ENCODE measurements at regions of chr12 and their contacts with region 1.

Region 1: GRCh38 chr12:57712701-57713100 is 18.8 kb downstream of the OS9 start:
- DNase-seq: no peak
- ATAC-seq: no peak
- H3K4me3 ChIP-seq: no peak overlapping the region
- H3K27ac ChIP-seq: no peak overlapping the region
- H3K4me1 ChIP-seq: no peaks in the 10 kb centered on the region
- H3K27me3 ChIP-seq: no peaks in the 10 kb centered on the region
- CTCF ChIP-seq: no peak
- POLR2A ChIP-seq: no peak
- RAD21 ChIP-seq: no peak

Region 2: GRCh38 chr12:57498571-57498970 is 214.1 kb before region 1 on chr12:
- CTCF ChIA-PET with region 1: no interaction called
- POLR2A ChIA-PET with region 1: interaction called, 14 read pairs
- dilution Hi-C with region 1: no loop called
- in situ Hi-C with region 1: no loop called
- intact Hi-C with region 1: no loop called
- DNase-seq: no peak
- ATAC-seq: no peak
- H3K4me3 ChIP-seq: no peak overlapping the region
- H3K27ac ChIP-seq: no peak overlapping the region
- H3K4me1 ChIP-seq: no peaks in the 10 kb centered on the region
- H3K27me3 ChIP-seq: no peaks in the 10 kb centered on the region
- CTCF ChIP-seq: no peak
- POLR2A ChIP-seq: no peak
- RAD21 ChIP-seq: no peak

Region 3: GRCh38 chr12:57796996-57797395 is 84.3 kb after region 1 on chr12:
- CTCF ChIA-PET with region 1: interaction called, 11 read pairs
- POLR2A ChIA-PET with region 1: no interaction called
- dilution Hi-C with region 1: no loop called
- in situ Hi-C with region 1: no loop called
- intact Hi-C with region 1: no loop called
- DNase-seq: no peak
- ATAC-seq: no peak
- H3K4me3 ChIP-seq: no peak overlapping the region
- H3K27ac ChIP-seq: no peak overlapping the region
- H3K4me1 ChIP-seq: peaks cover 2% of the 10 kb centered on the region; the same call in 1 of the 2 replicates
- H3K27me3 ChIP-seq: no peaks in the 10 kb centered on the region
- CTCF ChIP-seq: no peak
- POLR2A ChIP-seq: no peak
- RAD21 ChIP-seq: no peak